ENCODE measurements at regions of chr17 and their contacts with region 1.

Region 1: DNA sequence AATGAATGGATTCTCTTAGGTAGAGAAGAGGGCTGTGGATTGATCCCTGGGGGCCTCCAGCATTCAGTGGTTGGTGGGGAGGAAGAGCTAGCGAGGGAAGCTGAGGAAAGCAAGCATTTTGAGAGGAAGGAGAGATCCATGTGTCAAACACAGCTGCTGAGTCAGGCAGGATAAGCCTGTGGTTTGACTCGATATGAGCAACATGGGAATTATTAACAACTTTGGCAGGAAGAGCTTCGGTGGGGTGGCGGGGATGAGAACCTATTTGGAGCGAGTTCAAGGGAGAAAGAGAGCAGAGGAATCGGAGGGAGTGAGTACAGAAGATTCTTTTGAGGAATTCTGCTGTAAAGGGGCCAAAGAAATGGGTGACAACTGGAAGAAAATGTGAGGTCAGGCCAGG is 59.5 kb upstream of the CDC42EP4 start:
- DNase-seq: no peak
- ATAC-seq: no peak
- H3K4me3 ChIP-seq: no peak overlapping the region
- H3K4me3 Mint-ChIP-seq: no peak overlapping the region
- H3K27ac ChIP-seq: no peak overlapping the region
- H3K27ac Mint-ChIP-seq: no peak overlapping the region
- H3K4me1 ChIP-seq: no peaks in the 10 kb centered on the region
- H3K4me1 Mint-ChIP-seq: no peaks in the 10 kb centered on the region
- H3K27me3 ChIP-seq: no peaks in the 10 kb centered on the region
- H3K27me3 Mint-ChIP-seq: peaks cover 4% of the 10 kb centered on the region
- CTCF ChIP-seq: no peak

Region 2: GRCh38 chr17:72556944-72557826 is 814.1 kb before region 1 on chr17:
- CTCF ChIA-PET with region 1: interaction called, 43 read pairs
- POLR2A ChIA-PET with region 1: no interaction called
- intact Hi-C with region 1: no loop called
- DNase-seq: peak; percentile 51
- ATAC-seq: peak; percentile 56
- H3K4me3 ChIP-seq: no peak overlapping the region
- H3K4me3 Mint-ChIP-seq: no peak overlapping the region
- H3K27ac ChIP-seq: no peak overlapping the region
- H3K27ac Mint-ChIP-seq: no peak overlapping the region
- H3K4me1 ChIP-seq: no peaks in the 10 kb centered on the region
- H3K4me1 Mint-ChIP-seq: no peaks in the 10 kb centered on the region
- H3K27me3 ChIP-seq: no peaks in the 10 kb centered on the region
- H3K27me3 Mint-ChIP-seq: peaks cover 4% of the 10 kb centered on the region
- CTCF ChIP-seq: peak; percentile 74

Region 3: DNA sequence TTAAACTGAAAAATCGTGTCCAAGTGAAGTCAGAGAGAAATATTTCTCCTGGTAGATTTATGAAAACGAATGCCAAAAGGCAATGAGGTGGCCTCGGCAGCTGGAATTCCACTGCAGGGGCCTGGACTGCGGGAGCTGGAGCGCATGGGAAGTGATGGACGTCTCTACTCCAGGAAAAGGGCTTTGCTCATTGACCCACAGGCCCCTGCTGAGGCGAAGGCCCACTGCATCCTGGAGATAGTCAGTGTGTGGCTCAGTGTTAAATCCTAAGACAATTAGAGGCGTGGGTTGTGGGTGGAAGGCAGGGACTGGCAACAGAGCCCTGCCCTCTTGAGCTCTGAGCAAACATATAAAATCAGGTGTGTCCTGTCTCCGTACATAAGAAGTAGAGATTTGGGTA is 470.2 kb before region 1 on chr17:
- CTCF ChIA-PET with region 1: no interaction called
- POLR2A ChIA-PET with region 1: no interaction called
- intact Hi-C with region 1: no loop called
- DNase-seq: no peak
- ATAC-seq: no peak
- H3K4me3 ChIP-seq: no peak overlapping the region
- H3K4me3 Mint-ChIP-seq: no peak overlapping the region
- H3K27ac ChIP-seq: no peak overlapping the region
- H3K27ac Mint-ChIP-seq: no peak overlapping the region
- H3K4me1 ChIP-seq: no peaks in the 10 kb centered on the region
- H3K4me1 Mint-ChIP-seq: no peaks in the 10 kb centered on the region
- H3K27me3 ChIP-seq: no peaks in the 10 kb centered on the region
- H3K27me3 Mint-ChIP-seq: no peaks in the 10 kb centered on the region
- CTCF ChIP-seq: no peak

Region 4: GRCh38 chr17:73401911-73402310 is 30.6 kb after region 1 on chr17:
- CTCF ChIA-PET with region 1: no interaction called
- POLR2A ChIA-PET with region 1: no interaction called
- intact Hi-C with region 1: no loop called
- DNase-seq: no peak
- ATAC-seq: no peak
- H3K4me3 ChIP-seq: no peak overlapping the region
- H3K4me3 Mint-ChIP-seq: no peak overlapping the region
- H3K27ac ChIP-seq: no peak overlapping the region
- H3K27ac Mint-ChIP-seq: no peak overlapping the region
- H3K4me1 ChIP-seq: no peaks in the 10 kb centered on the region
- H3K4me1 Mint-ChIP-seq: no peaks in the 10 kb centered on the region
- H3K27me3 ChIP-seq: no peaks in the 10 kb centered on the region
- H3K27me3 Mint-ChIP-seq: no peaks in the 10 kb centered on the region
- CTCF ChIP-seq: no peak

Region 5: DNA sequence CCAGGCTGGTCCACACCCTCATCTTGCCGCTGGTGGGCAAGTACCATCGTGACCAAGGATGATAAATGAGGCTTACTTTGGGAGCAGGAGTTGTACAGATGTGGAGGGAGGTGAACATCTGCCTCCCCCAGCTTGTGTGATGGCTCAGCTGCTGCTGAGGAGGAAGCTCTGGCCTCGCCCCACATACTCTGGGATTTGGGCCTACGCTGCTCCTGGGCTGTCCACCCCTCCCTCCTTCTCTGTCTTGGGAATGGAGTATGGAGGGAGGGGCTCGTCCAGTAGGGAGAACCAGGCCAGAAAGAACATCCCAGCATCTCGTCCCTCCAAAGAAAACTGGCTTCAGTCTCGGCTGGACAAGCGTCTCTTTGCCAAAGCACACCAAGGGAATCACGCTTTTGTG is 75.3 kb after region 1 on chr17:
- CTCF ChIA-PET with region 1: no interaction called
- POLR2A ChIA-PET with region 1: no interaction called
- intact Hi-C with region 1: no loop called
- DNase-seq: no peak
- ATAC-seq: no peak
- H3K4me3 ChIP-seq: no peak overlapping the region
- H3K4me3 Mint-ChIP-seq: no peak overlapping the region
- H3K27ac ChIP-seq: no peak overlapping the region
- H3K27ac Mint-ChIP-seq: no peak overlapping the region
- H3K4me1 ChIP-seq: no peaks in the 10 kb centered on the region
- H3K4me1 Mint-ChIP-seq: no peaks in the 10 kb centered on the region
- H3K27me3 ChIP-seq: no peaks in the 10 kb centered on the region
- H3K27me3 Mint-ChIP-seq: no peaks in the 10 kb centered on the region
- CTCF ChIP-seq: no peak

Region 6: GRCh38 chr17:73595479-73595878 is 224.2 kb after region 1 on chr17:
- CTCF ChIA-PET with region 1: no interaction called
- POLR2A ChIA-PET with region 1: no interaction called
- intact Hi-C with region 1: no loop called
- DNase-seq: peak; percentile 43
- ATAC-seq: peak; percentile 18
- H3K4me3 ChIP-seq: no peak overlapping the region
- H3K4me3 Mint-ChIP-seq: no peak overlapping the region
- H3K27ac ChIP-seq: peak overlapping the region; percentile 55 to 97
- H3K27ac Mint-ChIP-seq: peak overlapping the region; percentile 97
- H3K4me1 ChIP-seq: peaks cover 63 to 75% of the 10 kb centered on the region in 2 donors
- H3K4me1 Mint-ChIP-seq: peaks cover 83% of the 10 kb centered on the region
- H3K27me3 ChIP-seq: no peaks in the 10 kb centered on the region
- H3K27me3 Mint-ChIP-seq: no peaks in the 10 kb centered on the region
- CTCF ChIP-seq: peak; percentile 42

Measured in B cell (primary cell).